ENCODE measurements at regions of chr17 and their contacts with region 1.

Region 1: GRCh38 chr17:4565209-4566141 is 5.1 kb upstream of the GGT6 start:
- DNase-seq: peak; percentile 83
- ATAC-seq: peak; percentile 77
- H3K4me3 ChIP-seq: 0 out of 6 replicates have a peak overlapping the region, but pooled peaks of 1 of the 3 experiments have one; percentile 4
- H3K27ac ChIP-seq: no peak overlapping the region
- H3K4me1 ChIP-seq: peaks cover 64% of the 10 kb centered on the region
- H3K27me3 ChIP-seq: no peaks in the 10 kb centered on the region
- CTCF ChIP-seq: peak; percentile 87
- EP300 ChIP-seq: no peak
- POLR2A ChIP-seq: no peak
- RAD21 ChIP-seq: no peak

Region 2: GRCh38 chr17:4476511-4477070 is 88.9 kb before region 1 on chr17:
- CTCF ChIA-PET with region 1: no interaction called
- POLR2A ChIA-PET with region 1: no interaction called
- in situ Hi-C with region 1: no loop called
- intact Hi-C with region 1: no loop called
- DNase-seq: no peak
- ATAC-seq: no peak
- H3K4me3 ChIP-seq: no peak overlapping the region
- H3K27ac ChIP-seq: no peak overlapping the region
- H3K4me1 ChIP-seq: peaks cover 43% of the 10 kb centered on the region
- H3K27me3 ChIP-seq: peaks cover 2 to 43% of the 10 kb centered on the region in 2 experiments
- CTCF ChIP-seq: no peak
- EP300 ChIP-seq: no peak
- POLR2A ChIP-seq: no peak
- RAD21 ChIP-seq: no peak

Region 3: DNA sequence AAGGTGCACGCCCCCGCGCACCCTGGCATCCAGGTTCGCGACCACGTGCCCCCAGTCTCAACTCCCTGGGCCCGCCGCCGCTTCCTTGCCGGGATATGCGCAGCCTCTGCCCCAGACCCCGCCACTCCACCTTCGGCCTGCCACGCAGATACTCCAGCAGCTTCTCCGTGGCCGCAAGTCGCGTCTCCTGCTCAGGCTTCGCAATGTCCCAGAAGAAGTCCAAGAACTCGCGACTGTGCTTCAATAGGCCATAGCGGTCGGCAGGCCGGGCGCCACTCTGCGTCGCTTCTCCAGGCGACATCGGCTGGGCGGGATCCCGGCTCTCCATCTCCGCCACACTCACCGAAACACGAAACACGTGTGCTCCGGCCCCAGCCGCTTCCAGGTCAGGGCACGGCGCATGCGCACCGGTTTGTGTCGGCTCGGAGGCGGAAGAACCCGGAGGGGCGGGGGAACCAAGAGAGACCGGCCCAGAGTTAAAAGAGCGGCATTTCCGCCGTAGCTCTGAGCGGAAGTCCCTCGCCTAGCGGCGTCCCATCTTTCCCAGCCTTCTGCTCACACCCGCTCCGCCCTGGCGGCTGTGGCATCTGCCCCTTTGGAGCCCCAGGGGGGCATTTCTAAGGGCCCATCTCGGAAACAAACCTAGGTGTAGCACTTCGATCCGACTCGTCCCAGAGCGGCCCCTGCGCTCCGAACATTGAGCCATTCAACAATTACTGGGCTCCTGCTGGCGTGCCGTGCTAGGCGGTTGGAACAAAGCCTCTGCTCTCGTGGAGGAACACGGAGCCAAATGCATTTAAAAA is 10.3 kb before region 1 on chr17 and contains the start of gene MYBBP1A:
- CTCF ChIA-PET with region 1: no interaction called
- POLR2A ChIA-PET with region 1: interaction called, 15 read pairs
- in situ Hi-C with region 1: no loop called
- intact Hi-C with region 1: no loop called
- DNase-seq: peak; percentile 92
- ATAC-seq: peak; percentile 91
- H3K4me3 ChIP-seq: peak within 1 kb of the TSS; percentile 56 to 95 (median 87)
- H3K27ac ChIP-seq: peak within 1 kb of the TSS; percentile 69
- H3K4me1 ChIP-seq: peaks cover 43% of the 10 kb centered on the region
- H3K27me3 ChIP-seq: no peaks in the 10 kb centered on the region
- CTCF ChIP-seq: peak; percentile 36; the same call in 1 of the 2 replicates
- EP300 ChIP-seq: no peak
- POLR2A ChIP-seq: peak; percentile 78 to 92
- RAD21 ChIP-seq: no peak
- total RNA-seq, gene MYBBP1A: 40.4 and 54.8 TPM in 2 replicates

Region 4: GRCh38 chr17:4576729-4577322 is 11.4 kb after region 1 on chr17:
- CTCF ChIA-PET with region 1: no interaction called
- POLR2A ChIA-PET with region 1: interaction called, 18 read pairs
- in situ Hi-C with region 1: no loop called
- intact Hi-C with region 1: loop called (anchors 2 kb)
- DNase-seq: peak; percentile 52
- ATAC-seq: peak; percentile 81
- H3K4me3 ChIP-seq: peak overlapping the region; percentile 47 to 67 (median 56)
- H3K27ac ChIP-seq: peak overlapping the region; percentile 33
- H3K4me1 ChIP-seq: peaks cover 65% of the 10 kb centered on the region
- H3K27me3 ChIP-seq: peaks cover 2 to 11% of the 10 kb centered on the region in 2 experiments; a peak in 3 of 5 replicates
- CTCF ChIP-seq: no peak
- EP300 ChIP-seq: no peak
- POLR2A ChIP-seq: peak in 1 of 2 experiments; percentile 31; a peak in 1 of 4 replicates
- RAD21 ChIP-seq: no peak

Region 5: GRCh38 chr17:4583782-4584100 is 18.3 kb after region 1 on chr17:
- CTCF ChIA-PET with region 1: interaction called, 13 read pairs
- POLR2A ChIA-PET with region 1: interaction called, 5 read pairs
- in situ Hi-C with region 1: no loop called
- intact Hi-C with region 1: loop called (anchors 2 kb)
- DNase-seq: no peak
- ATAC-seq: peak; percentile 77
- H3K4me3 ChIP-seq: peak overlapping the region; percentile 58 to 73 (median 61); a peak in 5 of 6 replicates
- H3K27ac ChIP-seq: no peak overlapping the region
- H3K4me1 ChIP-seq: peaks cover 56% of the 10 kb centered on the region
- H3K27me3 ChIP-seq: peaks cover 2 to 47% of the 10 kb centered on the region in 2 experiments; a peak in 4 of 5 replicates
- CTCF ChIP-seq: 0 out of 2 replicates have a peak, but pooled peaks have one; percentile 30
- EP300 ChIP-seq: no peak
- POLR2A ChIP-seq: no peak
- RAD21 ChIP-seq: no peak

Region 6: GRCh38 chr17:4607773-4608187 is 42.3 kb after region 1 on chr17:
- CTCF ChIA-PET with region 1: no interaction called
- POLR2A ChIA-PET with region 1: no interaction called
- in situ Hi-C with region 1: no loop called
- intact Hi-C with region 1: no loop called
- DNase-seq: no peak
- ATAC-seq: no peak
- H3K4me3 ChIP-seq: no peak overlapping the region
- H3K27ac ChIP-seq: no peak overlapping the region
- H3K4me1 ChIP-seq: peaks cover 65% of the 10 kb centered on the region
- H3K27me3 ChIP-seq: no peaks in the 10 kb centered on the region
- CTCF ChIP-seq: no peak
- EP300 ChIP-seq: no peak
- POLR2A ChIP-seq: no peak
- RAD21 ChIP-seq: no peak

Region 7: DNA sequence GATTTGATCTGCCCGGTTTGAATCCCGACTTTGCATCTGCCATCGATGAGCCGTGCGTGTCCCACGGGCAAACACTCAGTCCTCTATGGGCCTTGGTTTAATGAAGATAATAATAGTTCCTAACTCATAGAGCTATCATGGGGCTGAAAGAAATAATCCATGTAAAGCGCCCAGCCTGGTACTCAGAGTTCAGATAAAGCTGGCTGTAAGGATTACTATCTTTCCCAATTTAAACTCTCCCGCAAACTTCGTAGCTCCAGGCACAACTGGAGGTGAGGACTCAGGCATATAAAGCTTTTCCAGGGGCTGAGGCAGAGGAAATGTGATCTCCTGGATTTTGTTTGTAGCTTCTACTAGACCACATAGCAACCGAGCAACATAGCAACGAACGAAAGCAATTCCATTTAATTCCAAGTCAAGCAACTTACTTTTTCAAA is 59.7 kb after region 1 on chr17:
- CTCF ChIA-PET with region 1: interaction called, 70 read pairs
- POLR2A ChIA-PET with region 1: interaction called, 5 read pairs
- in situ Hi-C with region 1: loop called (anchors 5 kb)
- intact Hi-C with region 1: loop called (anchors 1 kb)
- DNase-seq: no peak
- ATAC-seq: no peak
- H3K4me3 ChIP-seq: no peak overlapping the region
- H3K27ac ChIP-seq: no peak overlapping the region
- H3K4me1 ChIP-seq: peaks cover 5% of the 10 kb centered on the region
- H3K27me3 ChIP-seq: peaks cover 0 to 3% of the 10 kb centered on the region in 2 experiments; a peak in 1 of 5 replicates
- CTCF ChIP-seq: no peak
- EP300 ChIP-seq: no peak
- POLR2A ChIP-seq: no peak
- RAD21 ChIP-seq: no peak

Region 8: GRCh38 chr17:4881761-4882555 is 316.5 kb after region 1 on chr17:
- CTCF ChIA-PET with region 1: no interaction called
- POLR2A ChIA-PET with region 1: no interaction called
- in situ Hi-C with region 1: no loop called
- intact Hi-C with region 1: loop called (anchors 10 kb)
- DNase-seq: peak; percentile 41
- ATAC-seq: peak; percentile 90
- H3K4me3 ChIP-seq: no peak overlapping the region
- H3K27ac ChIP-seq: no peak overlapping the region
- H3K4me1 ChIP-seq: no peaks in the 10 kb centered on the region
- H3K27me3 ChIP-seq: no peaks in the 10 kb centered on the region
- CTCF ChIP-seq: peak; percentile 88
- EP300 ChIP-seq: no peak
- POLR2A ChIP-seq: no peak
- RAD21 ChIP-seq: peak; percentile 84

Measured in HepG2 (cell line).